Sciatic nerve (tissue), 2 donors: ENCODE measurements at regions of chr16 and their contacts with region 1.

Region 1: GRCh38 chr16:57994778-57995177 is 5.7 kb downstream of the ZNF319 start:
- DNase-seq: no peak
- ATAC-seq: no peak

Region 2: DNA sequence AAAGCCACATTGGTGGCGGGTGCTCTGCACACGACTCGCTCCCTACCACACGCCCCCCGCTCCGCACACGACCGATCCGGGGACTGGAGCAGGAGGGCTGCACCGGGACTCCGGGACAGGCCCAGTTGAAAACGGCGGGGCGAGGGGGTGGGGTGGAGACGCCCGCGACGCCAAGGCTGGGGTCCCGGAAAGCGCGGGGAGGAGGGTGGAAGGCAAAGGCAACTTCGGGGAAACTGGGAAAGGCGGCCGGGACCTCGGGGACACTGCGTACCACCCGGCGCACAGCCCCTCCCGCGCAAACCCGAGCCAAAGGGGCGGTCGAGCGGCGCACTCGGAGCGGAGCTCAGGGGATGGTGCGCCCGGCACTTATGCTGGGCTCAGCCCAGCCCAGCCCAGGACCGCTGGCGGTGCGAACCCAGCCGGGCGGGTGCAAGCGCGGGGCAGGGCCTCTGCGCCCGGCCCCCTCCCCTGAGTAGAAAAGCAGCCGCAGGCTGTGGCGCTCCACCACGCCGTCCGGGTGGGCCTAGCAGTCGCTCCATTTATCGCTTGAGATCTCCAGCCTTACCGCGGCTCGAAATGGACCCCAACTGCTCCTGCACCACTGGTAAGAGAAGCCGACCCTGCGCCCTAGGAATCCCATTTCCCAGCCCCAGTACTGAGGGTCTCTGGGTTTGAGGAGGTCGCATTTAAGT is 1362.5 kb before region 1 on chr16 and contains the start of gene MT1M:
- intact Hi-C with region 1: no loop called
- DNase-seq: peak; percentile 66
- ATAC-seq: peak; percentile 82
- total RNA-seq, gene MT1M: 6.7 TPM

Region 3: GRCh38 chr16:56944954-56945839 is 1049.6 kb before region 1 on chr16:
- intact Hi-C with region 1: no loop called
- DNase-seq: no peak
- ATAC-seq: peak; percentile 10

Region 4: DNA sequence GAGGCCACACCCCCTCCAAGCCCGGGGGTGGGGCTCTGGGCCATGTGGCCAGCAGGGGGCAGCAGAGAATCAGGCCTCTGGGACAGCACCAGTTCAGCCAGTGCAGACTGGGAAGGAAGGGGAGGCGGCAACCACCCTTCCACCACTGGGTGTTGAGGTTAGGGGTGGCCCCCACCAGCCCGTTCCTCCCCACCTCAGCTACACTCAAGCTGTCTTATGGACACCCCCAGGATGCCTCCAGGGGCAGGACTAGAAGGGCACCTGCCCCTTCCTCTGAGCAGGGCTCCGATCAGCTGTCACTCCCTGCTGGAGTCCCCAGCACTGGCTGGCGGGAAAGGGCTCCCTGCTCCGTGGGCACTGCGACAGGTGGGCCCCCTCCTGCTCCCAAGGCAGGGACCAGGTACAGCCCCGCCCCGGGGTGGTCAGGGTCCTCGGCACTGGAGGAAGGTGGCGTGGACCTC is 237.4 kb before region 1 on chr16:
- intact Hi-C with region 1: loop called (anchors 10 kb)
- DNase-seq: peak; percentile 96
- ATAC-seq: peak; percentile 94

Region 5: DNA sequence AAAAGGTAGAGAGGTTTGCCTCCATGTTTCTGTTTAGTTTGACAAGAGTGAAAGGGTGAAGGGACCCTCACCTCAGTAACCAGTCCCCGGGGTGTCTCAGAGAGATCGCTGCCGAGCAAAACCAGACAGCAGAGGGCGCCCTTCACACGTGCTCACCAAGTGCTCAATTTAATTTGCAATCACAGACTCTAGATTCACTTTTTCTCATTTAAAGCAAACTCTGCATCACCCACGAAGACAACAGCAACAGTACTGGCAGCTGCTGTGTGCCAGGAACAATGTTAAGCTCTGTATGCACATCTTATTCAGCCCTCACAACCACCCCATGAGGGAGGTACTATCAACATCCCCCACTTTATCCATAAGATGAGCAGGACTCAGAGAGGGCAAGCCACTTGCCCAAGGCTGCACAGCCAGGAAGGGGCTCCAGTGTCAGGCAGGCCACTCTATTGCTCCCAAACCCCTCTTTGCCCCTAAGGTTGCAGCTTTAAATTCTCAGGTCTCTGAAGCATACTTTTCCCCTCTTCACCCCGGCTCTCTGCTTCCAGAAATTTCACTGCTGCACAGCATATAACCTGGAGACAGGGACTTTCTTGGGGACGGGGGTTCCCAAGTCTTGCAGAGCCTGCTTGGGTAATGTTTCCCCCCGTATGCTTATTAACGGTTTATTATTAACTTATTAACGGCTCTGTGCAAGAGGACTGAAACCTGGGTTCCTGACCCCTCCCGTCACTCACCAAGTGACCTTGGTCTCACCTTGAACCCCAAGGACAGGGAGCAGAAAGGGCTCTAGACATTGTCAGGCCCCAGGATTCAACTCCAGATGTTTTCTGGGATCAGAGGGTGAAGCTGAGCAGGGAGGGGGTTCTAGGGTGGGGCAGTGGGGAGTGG is 94.8 kb before region 1 on chr16:
- intact Hi-C with region 1: loop called (anchors 5 kb)
- DNase-seq: peak; percentile 85
- ATAC-seq: peak; percentile 80